ENCODE measurements at regions of chr6 and their contacts with region 1.

Region 1: GRCh38 chr6:35139908-35140655 is 1.1 kb downstream of the TCP11 start:
- DNase-seq: no peak
- H3K4me3 ChIP-seq: no peak overlapping the region
- H3K27ac ChIP-seq: no peak overlapping the region
- H3K4me1 ChIP-seq: peaks cover 19% of the 10 kb centered on the region
- H3K27me3 ChIP-seq: no peaks in the 10 kb centered on the region
- CTCF ChIP-seq: peak; percentile 90

Region 2: GRCh38 chr6:34986845-34987246 is 153.2 kb before region 1 on chr6:
- intact Hi-C with region 1: loop called (anchors 5 kb)
- DNase-seq: peak; percentile 33
- H3K4me3 ChIP-seq: no peak overlapping the region
- H3K27ac ChIP-seq: no peak overlapping the region
- H3K4me1 ChIP-seq: peaks cover 15% of the 10 kb centered on the region
- H3K27me3 ChIP-seq: no peaks in the 10 kb centered on the region
- CTCF ChIP-seq: peak; percentile 89

Region 3: DNA sequence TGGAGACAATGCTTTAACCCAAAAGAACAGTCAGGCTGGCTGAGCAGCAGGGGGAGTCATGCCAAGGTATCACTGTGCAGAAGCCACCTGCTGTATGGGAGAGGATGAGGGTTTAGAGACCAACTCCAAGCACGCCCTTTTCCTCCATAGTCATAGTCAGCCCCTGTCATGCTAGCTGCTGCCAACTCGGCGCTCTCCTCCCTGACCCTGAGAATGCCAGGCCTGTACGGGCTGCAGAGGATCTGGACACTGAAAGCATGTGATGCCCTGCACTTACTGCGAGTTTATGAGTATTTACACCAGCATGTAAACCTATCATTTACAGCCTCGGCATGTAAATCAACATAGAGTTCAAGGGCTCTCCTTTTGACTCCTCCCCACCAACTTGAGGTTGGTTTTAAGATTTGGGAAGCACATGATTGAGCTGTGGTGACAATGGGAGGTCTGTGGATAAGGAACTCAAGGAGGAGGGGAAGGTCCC is 62.0 kb after region 1 on chr6:
- intact Hi-C with region 1: loop called (anchors 10 kb)
- DNase-seq: peak; percentile 30
- H3K4me3 ChIP-seq: no peak overlapping the region
- H3K27ac ChIP-seq: peak overlapping the region; percentile 27
- H3K4me1 ChIP-seq: peaks cover 24% of the 10 kb centered on the region
- H3K27me3 ChIP-seq: peaks cover 8% of the 10 kb centered on the region
- CTCF ChIP-seq: no peak

Region 4: DNA sequence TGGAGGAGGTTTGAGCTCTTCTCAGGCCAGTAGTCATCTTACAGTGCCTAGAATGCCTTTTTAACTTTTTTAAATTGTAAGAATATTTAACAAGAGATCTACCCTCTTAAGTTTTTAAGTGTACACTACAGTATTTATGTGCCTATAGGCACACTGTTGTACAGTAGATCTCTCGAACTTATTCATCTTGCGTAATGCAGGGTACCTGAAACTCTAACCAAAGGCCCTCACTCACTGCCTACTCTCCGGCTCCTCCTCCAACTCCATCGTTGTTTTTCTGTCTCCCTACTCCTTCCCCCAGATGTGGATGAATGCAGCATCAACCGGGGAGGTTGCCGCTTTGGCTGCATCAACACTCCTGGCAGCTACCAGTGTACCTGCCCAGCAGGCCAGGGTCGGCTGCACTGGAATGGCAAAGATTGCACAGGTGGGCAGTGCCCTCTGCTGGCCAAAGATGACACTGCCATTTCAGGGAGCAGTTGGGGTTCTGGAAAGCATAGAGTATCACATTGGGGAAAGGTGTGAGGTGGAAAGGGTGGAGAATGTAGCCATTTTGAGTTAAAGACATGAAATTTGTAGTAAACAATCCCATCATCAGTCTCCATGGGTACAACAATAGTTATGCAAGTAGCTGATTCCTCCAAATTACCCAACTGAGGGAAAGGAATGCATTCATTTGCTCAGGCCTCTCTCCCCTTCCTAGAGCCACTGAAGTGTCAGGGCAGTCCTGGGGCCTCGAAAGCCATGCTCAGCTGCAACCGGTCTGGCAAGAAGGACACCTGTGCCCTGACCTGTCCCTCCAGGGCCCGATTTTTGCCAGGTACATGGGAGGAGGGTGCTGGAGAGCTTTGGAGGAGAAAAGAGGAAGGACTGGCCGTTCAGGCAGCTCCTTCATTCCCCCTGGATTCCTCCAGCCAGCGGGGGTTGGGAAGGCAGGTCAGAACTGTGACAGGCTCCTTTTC is 101.0 kb after region 1 on chr6:
- intact Hi-C with region 1: loop called (anchors 10 kb)
- DNase-seq: peak; percentile 74
- H3K4me3 ChIP-seq: no peak overlapping the region
- H3K27ac ChIP-seq: no peak overlapping the region
- H3K4me1 ChIP-seq: peaks cover 47% of the 10 kb centered on the region
- H3K27me3 ChIP-seq: no peaks in the 10 kb centered on the region
- CTCF ChIP-seq: peak; percentile 96

Region 5: GRCh38 chr6:35297601-35298481 is 157.8 kb after region 1 on chr6 and contains the start of gene DEF6:
- intact Hi-C with region 1: no loop called
- DNase-seq: peak; percentile 82
- H3K4me3 ChIP-seq: peak within 1 kb of the TSS; percentile 63
- H3K27ac ChIP-seq: peak within 1 kb of the TSS; percentile 61
- H3K4me1 ChIP-seq: peaks cover 34% of the 10 kb centered on the region
- H3K27me3 ChIP-seq: no peaks in the 10 kb centered on the region
- CTCF ChIP-seq: peak; percentile 82
- total RNA-seq, gene DEF6: 1.0 TPM

Region 6: GRCh38 chr6:35359751-35360348 is 219.8 kb after region 1 on chr6:
- intact Hi-C with region 1: no loop called
- DNase-seq: peak; percentile 26
- H3K4me3 ChIP-seq: no peak overlapping the region
- H3K27ac ChIP-seq: peak overlapping the region; percentile 74
- H3K4me1 ChIP-seq: peaks cover 66% of the 10 kb centered on the region
- H3K27me3 ChIP-seq: no peaks in the 10 kb centered on the region
- CTCF ChIP-seq: no peak

Region 7: GRCh38 chr6:35642471-35643161 is 502.5 kb after region 1 on chr6:
- intact Hi-C with region 1: no loop called
- DNase-seq: no peak
- H3K4me3 ChIP-seq: no peak overlapping the region
- H3K27ac ChIP-seq: no peak overlapping the region
- H3K4me1 ChIP-seq: peaks cover 35% of the 10 kb centered on the region
- H3K27me3 ChIP-seq: no peaks in the 10 kb centered on the region
- CTCF ChIP-seq: no peak

Measured in left ventricle myocardium inferior (tissue), 1 donor.